Activated CD8-positive, alpha-beta memory T cell treated with anti-CD3 and anti-CD28 coated beads, Interleukin-2, amount 10 ng/mL, durations not matched to agents 7 days and 5 days (primary cell): ENCODE measurements at regions of chr17 and their contacts with region 1.

Region 1: GRCh38 chr17:39822051-39822451 is 42.1 kb downstream of the IKZF3 start:
- DNase-seq: no peak
- ATAC-seq: no peak
- H3K4me3 Mint-ChIP-seq: no peak overlapping the region
- H3K27ac Mint-ChIP-seq: peak overlapping the region; percentile 39
- H3K4me1 Mint-ChIP-seq: peaks cover 52% of the 10 kb centered on the region
- H3K27me3 Mint-ChIP-seq: no peaks in the 10 kb centered on the region

Region 2: DNA sequence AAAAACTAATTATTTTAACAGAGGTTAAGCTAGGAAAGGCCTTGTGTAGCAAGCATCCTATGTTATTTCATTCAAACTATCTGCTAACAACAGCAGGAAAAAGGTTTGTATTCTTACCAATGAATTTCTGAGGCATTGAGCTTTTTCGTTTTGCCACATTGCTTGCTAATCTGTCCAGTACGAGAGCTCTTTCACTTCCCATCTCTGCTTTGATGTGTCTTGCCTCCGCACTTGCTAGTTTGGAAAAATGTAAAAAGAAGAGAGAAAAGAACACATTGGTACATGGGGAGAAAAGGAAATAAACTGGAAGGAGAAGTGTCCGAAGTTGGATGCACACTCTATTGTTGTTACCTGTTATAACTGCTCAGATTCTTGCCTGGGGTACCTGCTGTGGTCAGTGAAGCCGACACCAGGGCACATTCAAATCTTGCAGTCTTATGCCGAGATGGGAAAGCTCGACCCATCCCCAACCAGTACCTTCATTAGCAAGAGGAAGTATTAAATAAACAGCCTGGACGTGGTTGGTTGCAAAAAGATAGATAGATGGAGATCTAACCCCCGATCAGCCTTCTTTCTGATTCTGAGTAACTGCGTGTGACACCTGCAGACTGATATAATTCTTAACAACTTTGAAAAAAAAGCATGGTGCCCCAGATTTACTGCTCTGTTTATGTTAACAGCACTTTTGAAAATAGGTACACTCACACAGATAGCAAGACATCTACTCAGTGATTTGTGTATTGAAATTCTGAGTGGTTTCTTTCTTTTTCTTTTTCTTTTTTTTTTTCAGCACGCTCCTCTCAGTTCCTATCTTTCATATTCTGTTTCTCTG is 44.3 kb before region 1 on chr17:
- CTCF ChIA-PET with region 1: interaction called, 10 read pairs
- DNase-seq: no peak
- ATAC-seq: peak; percentile 50
- H3K4me3 Mint-ChIP-seq: peak overlapping the region; percentile 89
- H3K27ac Mint-ChIP-seq: peak overlapping the region; percentile 92
- H3K4me1 Mint-ChIP-seq: peaks cover 81% of the 10 kb centered on the region
- H3K27me3 Mint-ChIP-seq: no peaks in the 10 kb centered on the region

Region 3: GRCh38 chr17:39835038-39835786 is 13.2 kb after region 1 on chr17:
- CTCF ChIA-PET with region 1: interaction called, 12 read pairs
- DNase-seq: no peak
- ATAC-seq: no peak
- H3K4me3 Mint-ChIP-seq: no peak overlapping the region
- H3K27ac Mint-ChIP-seq: no peak overlapping the region
- H3K4me1 Mint-ChIP-seq: peaks cover 23% of the 10 kb centered on the region
- H3K27me3 Mint-ChIP-seq: no peaks in the 10 kb centered on the region

Region 4: DNA sequence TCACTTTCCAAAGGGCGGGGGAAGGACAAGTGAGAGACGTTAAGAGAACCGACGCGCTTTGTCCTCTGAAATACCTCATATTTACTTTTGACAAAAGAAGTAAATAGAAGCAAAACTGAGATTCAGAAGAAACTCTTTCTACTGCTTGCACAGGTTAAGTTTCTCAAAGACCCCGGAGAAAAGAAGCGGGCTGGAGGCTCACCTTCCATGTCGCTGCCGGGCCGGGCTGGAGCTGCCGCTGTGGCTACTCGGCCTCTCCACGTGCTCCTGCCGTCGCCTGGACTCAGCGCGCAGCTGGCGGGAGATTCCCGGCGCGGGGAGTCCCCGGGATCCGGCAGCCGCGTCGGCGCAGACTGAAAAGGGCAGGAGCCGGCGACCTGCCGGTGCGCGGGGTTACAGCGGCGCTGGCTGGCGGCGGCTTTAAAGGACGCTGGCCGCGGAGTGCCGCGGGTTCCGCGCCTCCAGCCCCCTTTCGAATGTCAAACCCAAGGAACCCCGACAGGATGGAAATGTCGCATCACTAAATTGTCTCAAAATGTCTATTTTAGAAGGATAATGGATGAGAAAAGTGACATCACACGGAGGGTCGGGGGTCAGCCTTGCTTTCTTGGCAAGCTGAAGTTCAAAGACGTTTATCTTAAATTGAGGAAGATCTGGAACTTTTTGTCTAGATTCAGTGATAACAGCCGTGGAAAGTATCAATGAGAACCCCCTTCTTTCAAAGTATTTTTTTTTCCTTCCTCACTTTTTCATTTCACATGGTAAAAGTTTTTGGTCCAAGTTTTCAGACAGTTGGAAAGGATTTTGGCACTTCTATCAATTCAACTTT is 42.1 kb after region 1 on chr17 and contains the start of gene IKZF3:
- CTCF ChIA-PET with region 1: interaction called, 18 read pairs
- DNase-seq: peak; percentile 87
- ATAC-seq: peak; percentile 60
- H3K4me3 Mint-ChIP-seq: peak within 1 kb of the TSS; percentile 81
- H3K27ac Mint-ChIP-seq: peak within 1 kb of the TSS; percentile 94
- H3K4me1 Mint-ChIP-seq: peaks cover 58% of the 10 kb centered on the region
- H3K27me3 Mint-ChIP-seq: peaks cover 4% of the 10 kb centered on the region
- total RNA-seq, gene IKZF3: 70.8 to 119 TPM

Region 5: DNA sequence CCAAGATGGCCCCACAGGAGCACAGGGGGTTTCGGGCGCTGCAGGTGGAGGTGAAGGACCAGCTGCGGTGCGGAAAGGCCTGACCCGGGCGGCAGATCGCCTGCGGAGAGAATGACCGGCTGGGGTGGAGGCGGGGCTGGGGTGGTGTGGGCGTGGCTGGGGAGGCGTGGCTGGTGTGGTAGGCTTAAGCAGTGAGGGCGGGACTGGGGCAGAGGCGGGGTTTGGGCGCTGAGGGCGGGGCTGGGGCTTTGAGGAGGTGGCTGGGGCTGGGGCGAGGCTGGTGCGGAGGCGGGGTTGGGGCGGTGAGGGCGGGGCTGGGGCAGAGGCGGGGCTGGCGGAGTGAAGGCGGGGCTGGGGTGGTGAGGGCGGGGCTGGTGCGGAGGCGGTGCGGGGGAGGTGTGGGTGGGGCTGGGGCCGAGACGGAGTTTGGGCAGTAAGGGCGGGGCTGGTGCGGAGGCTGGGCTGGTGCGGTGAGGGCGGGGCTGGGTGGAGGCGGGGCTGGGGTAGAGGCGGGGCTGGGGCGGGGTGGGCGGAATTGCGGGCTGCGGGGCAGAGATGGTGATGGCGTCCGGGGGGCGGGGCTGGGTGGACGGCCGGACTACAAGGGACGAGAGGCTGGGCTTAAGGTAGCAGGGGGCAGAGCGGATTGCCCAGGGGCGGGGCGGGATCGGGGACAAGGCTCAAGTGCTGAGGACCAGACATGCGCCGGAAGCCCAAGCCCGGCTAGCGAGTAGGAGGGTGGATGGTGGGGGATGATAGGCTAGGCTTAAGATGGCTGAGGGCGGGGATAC is 130.8 kb after region 1 on chr17:
- CTCF ChIA-PET with region 1: no interaction called
- DNase-seq: peak; percentile 99
- ATAC-seq: peak; percentile 86
- H3K4me3 Mint-ChIP-seq: peak overlapping the region; percentile 76
- H3K27ac Mint-ChIP-seq: peak overlapping the region; percentile 82
- H3K4me1 Mint-ChIP-seq: peaks cover 18% of the 10 kb centered on the region
- H3K27me3 Mint-ChIP-seq: peaks cover 10% of the 10 kb centered on the region